ENCODE measurements at regions of chr6 and their contacts with region 1.

Region 1: GRCh38 chr6:132820629-132821381 is 6.4 kb downstream of the RPS12 start:
- DNase-seq: no peak
- H3K4me3 ChIP-seq: no peak overlapping the region
- H3K27ac ChIP-seq: no peak overlapping the region
- H3K4me1 ChIP-seq: peaks cover 13% of the 10 kb centered on the region
- H3K27me3 ChIP-seq: no peaks in the 10 kb centered on the region
- CTCF ChIP-seq: no peak
- POLR2A ChIP-seq: no peak

Region 2: DNA sequence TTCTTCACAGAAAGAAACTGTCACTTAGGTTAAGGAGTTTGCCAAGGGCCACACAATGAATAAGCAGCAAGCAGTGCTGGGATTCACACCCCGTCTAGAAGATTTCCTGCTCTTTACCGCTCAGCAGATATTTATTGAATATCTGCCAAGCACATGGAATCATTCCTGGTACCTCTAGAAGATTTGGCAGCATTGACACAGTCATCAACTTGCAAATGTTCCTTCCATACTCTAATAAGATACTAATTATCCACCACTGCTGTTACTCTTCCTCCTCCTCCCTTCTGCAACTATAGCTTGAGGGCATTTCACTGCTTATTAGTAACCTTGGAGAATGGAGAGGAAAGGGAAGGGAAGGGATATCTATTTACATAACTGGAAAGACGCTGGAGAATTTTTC is 432.5 kb before region 1 on chr6:
- intact Hi-C with region 1: no loop called
- DNase-seq: no peak
- H3K4me3 ChIP-seq: no peak overlapping the region
- H3K27ac ChIP-seq: no peak overlapping the region
- H3K4me1 ChIP-seq: no peaks in the 10 kb centered on the region
- H3K27me3 ChIP-seq: no peaks in the 10 kb centered on the region
- CTCF ChIP-seq: no peak
- POLR2A ChIP-seq: no peak

Region 3: DNA sequence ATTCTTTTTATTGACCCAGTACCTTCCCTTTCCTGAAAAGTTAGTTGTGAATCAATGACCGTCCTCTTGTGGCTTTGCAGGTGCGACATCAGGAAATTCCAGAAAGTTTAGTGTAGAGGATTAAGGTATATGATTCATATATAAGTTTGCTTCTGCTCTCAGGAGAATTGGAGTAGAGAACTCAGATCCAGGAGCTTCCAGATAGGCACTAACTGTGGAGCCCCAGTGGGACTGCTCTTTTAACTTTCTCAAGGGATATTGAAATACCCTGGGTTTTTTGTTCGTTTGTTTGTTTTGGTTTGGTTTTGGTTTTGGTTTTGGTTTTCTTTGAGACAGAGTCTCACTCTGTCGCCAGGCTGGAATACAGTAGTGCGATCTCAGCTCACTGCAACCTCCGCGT is 206.3 kb before region 1 on chr6:
- intact Hi-C with region 1: no loop called
- DNase-seq: no peak
- H3K4me3 ChIP-seq: no peak overlapping the region
- H3K27ac ChIP-seq: no peak overlapping the region
- H3K4me1 ChIP-seq: no peaks in the 10 kb centered on the region
- H3K27me3 ChIP-seq: no peaks in the 10 kb centered on the region
- CTCF ChIP-seq: no peak
- POLR2A ChIP-seq: no peak

Region 4: DNA sequence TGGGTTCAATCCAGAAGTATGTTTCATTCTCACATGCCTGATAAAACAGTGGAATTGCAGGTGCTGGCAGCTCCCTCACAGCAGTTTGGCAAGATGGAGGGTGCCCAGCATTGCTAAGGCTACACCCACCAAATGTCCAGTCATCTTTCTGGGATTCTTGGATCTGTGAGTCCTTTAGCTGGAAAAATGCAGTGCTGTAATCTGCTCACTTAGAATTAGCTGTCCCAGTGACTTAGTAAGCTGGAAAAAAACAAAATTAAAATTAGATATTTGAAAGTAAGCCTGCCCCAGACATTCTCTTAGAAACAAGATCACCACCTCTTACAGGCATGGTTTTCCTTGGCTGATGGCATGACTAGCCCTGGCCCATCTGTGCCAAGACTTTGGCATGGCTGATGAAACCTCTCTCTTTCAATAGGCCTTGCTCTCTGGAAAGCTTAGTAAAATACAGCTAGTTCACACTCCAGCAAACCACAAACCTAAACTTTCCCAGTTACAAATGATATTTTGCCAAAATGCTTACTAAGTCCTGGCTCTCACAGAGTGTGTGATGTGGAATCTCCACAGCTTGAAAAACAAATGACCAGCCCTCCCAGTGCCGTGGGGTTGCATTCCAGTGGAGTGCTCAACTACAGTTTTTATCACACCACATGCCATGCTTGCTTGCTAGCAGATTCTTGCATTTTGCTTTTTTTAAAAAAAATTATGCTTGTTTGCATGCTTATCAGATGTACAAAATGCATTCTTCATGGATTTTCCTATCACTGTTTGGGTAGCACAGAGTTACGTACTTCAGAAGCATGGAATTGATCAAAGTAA is 681.8 kb after region 1 on chr6:
- intact Hi-C with region 1: loop called (anchors 10 kb)
- DNase-seq: no peak
- H3K4me3 ChIP-seq: no peak overlapping the region
- H3K27ac ChIP-seq: no peak overlapping the region
- H3K4me1 ChIP-seq: peaks cover 5% of the 10 kb centered on the region
- H3K27me3 ChIP-seq: no peaks in the 10 kb centered on the region
- CTCF ChIP-seq: no peak
- POLR2A ChIP-seq: no peak

Region 5: DNA sequence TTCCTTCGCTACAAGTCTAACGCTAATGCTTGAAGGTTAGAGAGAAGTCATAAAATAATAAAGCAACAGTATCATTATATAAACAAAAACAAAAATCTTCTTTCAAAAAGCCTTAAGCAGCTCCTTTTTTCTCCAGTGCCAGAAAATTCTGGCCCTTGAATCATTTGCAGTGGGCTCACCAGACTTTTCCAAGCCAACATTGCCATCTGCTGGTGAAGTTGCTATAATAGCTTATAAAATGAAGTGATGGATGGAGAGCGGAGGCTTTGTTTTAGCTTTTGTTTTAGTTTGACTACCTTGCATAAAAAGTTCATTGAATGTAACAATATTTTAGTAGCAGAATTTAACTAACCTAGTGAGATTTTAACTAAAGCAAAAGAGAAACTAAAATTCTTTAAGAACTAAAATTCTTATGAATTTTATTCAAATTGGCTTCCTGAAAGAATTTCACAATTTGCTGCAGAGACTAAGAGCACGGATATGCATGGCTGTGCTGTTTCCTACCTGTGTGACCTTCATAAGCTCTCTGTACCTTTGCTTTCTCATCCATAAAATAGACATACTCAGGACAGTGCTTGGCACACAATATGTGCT is 1276.4 kb after region 1 on chr6:
- intact Hi-C with region 1: loop called (anchors 10 kb)
- DNase-seq: peak; percentile 51
- H3K4me3 ChIP-seq: no peak overlapping the region
- H3K27ac ChIP-seq: no peak overlapping the region
- H3K4me1 ChIP-seq: no peaks in the 10 kb centered on the region
- H3K27me3 ChIP-seq: no peaks in the 10 kb centered on the region
- CTCF ChIP-seq: peak; percentile 51 to 81 (median 74)
- POLR2A ChIP-seq: no peak